ENCODE measurements at regions of chr20 and their contacts with region 1.

Region 1: DNA sequence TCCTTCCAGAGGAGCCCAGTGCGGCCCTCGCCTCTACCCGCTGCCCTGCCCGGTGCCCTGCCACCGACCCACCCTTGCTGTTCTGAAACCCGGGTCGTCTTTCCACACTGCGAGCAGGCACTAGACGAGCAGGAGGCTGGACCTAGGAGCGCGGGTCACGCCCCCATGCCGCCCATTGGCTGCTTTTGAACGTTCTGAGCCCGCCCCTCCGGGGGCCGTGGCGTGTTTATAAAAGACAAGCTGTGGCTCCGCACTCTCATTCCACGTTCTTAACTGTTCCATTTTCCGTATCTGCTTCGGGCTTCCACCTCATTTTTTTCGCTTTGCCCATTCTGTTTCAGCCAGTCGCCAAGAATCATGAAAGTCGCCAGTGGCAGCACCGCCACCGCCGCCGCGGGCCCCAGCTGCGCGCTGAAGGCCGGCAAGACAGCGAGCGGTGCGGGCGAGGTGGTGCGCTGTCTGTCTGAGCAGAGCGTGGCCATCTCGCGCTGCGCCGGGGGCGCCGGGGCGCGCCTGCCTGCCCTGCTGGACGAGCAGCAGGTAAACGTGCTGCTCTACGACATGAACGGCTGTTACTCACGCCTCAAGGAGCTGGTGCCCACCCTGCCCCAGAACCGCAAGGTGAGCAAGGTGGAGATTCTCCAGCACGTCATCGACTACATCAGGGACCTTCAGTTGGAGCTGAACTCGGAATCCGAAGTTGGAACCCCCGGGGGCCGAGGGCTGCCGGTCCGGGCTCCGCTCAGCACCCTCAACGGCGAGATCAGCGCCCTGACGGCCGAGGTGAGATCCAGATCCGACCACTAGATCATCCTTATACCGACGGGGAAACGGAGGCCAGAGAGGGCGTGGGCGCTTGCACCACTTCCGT is at the start of gene ID1:
- DNase-seq: peak; percentile 91 to 98
- ATAC-seq: peak; percentile 51 to 62
- H3K4me3 ChIP-seq: peak within 1 kb of the TSS; percentile 93
- H3K27ac ChIP-seq: peak within 1 kb of the TSS; percentile 97 to 98
- H3K4me1 ChIP-seq: peaks cover 51% of the 10 kb centered on the region
- CTCF ChIP-seq: no peak
- EP300 ChIP-seq: no peak
- POLR2A ChIP-seq: peak; percentile 92
- RAD21 ChIP-seq: peak in 1 of 2 experiments; percentile 18; a peak in 2 of 5 replicates
- polyA plus RNA-seq, gene ID1: 237 and 250 TPM in 2 replicates

Region 2: GRCh38 chr20:31547017-31547675 is 58.1 kb before region 1 on chr20:
- CTCF ChIA-PET with region 1: interaction called, 966 read pairs
- POLR2A ChIA-PET with region 1: interaction called, 6 read pairs
- DNase-seq: no peak
- ATAC-seq: no peak
- H3K4me3 ChIP-seq: no peak overlapping the region
- H3K27ac ChIP-seq: no peak overlapping the region
- H3K4me1 ChIP-seq: peaks cover 7% of the 10 kb centered on the region
- CTCF ChIP-seq: no peak
- EP300 ChIP-seq: no peak
- POLR2A ChIP-seq: no peak
- RAD21 ChIP-seq: no peak

Region 3: GRCh38 chr20:31560094-31560899 is 45.0 kb before region 1 on chr20:
- CTCF ChIA-PET with region 1: interaction called, 966 read pairs
- POLR2A ChIA-PET with region 1: interaction called, 172 read pairs
- DNase-seq: peak; percentile 78 to 94
- ATAC-seq: peak; percentile 56 to 70
- H3K4me3 ChIP-seq: no peak overlapping the region
- H3K27ac ChIP-seq: peak overlapping the region; percentile 90 to 97
- H3K4me1 ChIP-seq: peaks cover 48% of the 10 kb centered on the region
- CTCF ChIP-seq: peak; percentile 95
- EP300 ChIP-seq: no peak
- POLR2A ChIP-seq: no peak
- RAD21 ChIP-seq: peak; percentile 65 to 66

Region 4: DNA sequence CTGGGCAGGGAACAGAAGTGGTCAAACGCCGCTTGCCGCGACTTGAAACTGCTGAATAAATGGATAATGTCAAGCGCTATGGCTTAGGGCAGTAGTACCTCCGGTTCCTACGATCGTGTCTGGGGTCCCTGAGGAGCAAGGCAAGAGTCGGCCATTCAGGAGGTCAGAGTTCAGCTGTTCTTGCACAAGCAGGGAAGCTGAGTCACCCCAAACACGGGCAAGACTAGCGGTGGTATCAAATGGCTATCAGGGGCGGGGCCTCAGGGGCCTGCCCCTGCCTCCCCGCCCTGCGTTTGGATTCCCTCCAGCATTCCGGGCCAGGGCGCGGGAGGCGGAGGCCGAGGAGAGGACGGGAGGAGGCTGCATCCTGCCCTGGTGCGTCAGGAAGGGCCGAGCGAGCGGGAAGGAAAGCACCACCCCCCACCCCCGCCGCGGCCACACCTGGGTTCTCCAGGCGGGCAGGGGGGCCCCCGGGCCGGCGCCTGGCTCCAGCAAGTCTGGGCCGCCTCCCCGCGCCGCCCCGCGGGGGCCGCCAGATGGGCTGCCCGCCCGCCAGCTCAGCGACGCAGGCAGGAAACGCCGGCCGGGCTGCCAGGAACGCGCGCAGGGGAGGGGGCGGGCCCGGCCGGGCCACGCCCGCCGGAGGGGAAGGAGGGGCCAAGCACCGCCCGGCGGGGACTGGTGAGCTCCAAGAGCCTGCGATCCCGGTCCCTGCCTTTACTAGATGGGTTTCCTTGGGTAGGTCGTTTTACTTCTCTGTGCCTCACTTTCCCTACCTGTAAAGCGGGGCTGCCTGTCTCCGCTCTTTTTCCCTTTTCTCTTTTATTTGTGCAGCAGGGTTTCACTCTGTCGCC is 32.3 kb before region 1 on chr20:
- CTCF ChIA-PET with region 1: interaction called, 903 read pairs
- POLR2A ChIA-PET with region 1: interaction called, 214 read pairs
- DNase-seq: peak; percentile 83 to 99
- ATAC-seq: peak; percentile 79
- H3K4me3 ChIP-seq: peak overlapping the region; percentile 62
- H3K27ac ChIP-seq: peak overlapping the region; percentile 93 to 99
- H3K4me1 ChIP-seq: peaks cover 53% of the 10 kb centered on the region
- CTCF ChIP-seq: no peak
- EP300 ChIP-seq: peak; percentile 92 to 98
- POLR2A ChIP-seq: peak; percentile 52
- RAD21 ChIP-seq: peak in 1 of 2 experiments; percentile 44; a peak in 3 of 5 replicates

Region 5: GRCh38 chr20:31580706-31581105 is 24.6 kb before region 1 on chr20:
- CTCF ChIA-PET with region 1: interaction called, 903 read pairs
- POLR2A ChIA-PET with region 1: interaction called, 10 read pairs
- DNase-seq: no peak
- ATAC-seq: no peak
- H3K4me3 ChIP-seq: no peak overlapping the region
- H3K27ac ChIP-seq: peak overlapping the region in 1 of 2 experiments; percentile 11; a peak in 3 of 6 replicates
- H3K4me1 ChIP-seq: no peaks in the 10 kb centered on the region
- CTCF ChIP-seq: no peak
- EP300 ChIP-seq: no peak
- POLR2A ChIP-seq: no peak
- RAD21 ChIP-seq: no peak

Region 6: DNA sequence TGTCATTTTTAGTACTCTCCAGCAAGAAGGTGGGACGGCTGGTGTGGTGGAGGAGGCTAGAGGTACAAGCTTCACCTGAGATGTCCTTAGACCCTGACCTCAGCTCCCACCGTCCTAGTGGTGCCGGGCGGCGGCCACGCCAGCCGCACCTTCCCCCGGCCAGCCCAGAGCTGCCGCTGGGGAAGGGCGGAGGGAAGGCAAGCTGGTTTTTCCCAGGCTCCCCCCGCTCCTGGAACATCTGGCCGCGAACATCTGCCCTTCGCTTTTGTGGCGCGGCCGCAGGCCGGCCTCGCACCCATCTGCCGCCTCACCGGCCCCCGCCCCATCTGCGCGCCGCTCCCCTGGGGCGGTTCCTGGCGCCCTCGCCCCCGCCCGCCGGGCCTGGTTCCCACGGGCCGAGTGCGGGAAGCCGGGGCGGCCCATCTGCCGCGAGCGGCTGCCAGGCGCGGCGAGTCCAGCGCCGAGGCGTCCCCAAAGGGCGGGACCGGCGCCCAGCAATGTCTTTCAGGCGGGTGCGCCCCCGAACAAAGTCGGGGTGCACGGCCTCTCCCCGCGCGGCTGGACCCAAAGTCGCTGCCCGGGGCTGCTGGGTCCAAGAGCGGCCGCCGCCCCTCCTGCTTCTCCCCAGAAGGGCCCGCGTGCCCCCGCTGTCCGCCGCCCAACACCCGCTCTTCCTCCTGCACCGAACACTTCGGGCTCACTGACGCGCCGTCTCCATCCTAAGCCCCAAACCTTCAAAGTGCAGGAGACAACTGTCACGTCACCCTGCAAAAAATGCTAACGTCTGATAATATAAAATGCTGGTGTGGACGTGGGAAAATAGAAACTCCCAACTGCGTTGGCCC is 17.5 kb before region 1 on chr20:
- CTCF ChIA-PET with region 1: interaction called, 172 read pairs
- POLR2A ChIA-PET with region 1: interaction called, 265 read pairs
- DNase-seq: no peak
- ATAC-seq: peak; percentile 72 to 81
- H3K4me3 ChIP-seq: peak overlapping the region; percentile 45
- H3K27ac ChIP-seq: peak overlapping the region; percentile 98
- H3K4me1 ChIP-seq: peaks cover 32% of the 10 kb centered on the region
- CTCF ChIP-seq: no peak
- EP300 ChIP-seq: no peak
- POLR2A ChIP-seq: peak; percentile 2; the same call in 1 of the 2 replicates
- RAD21 ChIP-seq: no peak

Region 7: DNA sequence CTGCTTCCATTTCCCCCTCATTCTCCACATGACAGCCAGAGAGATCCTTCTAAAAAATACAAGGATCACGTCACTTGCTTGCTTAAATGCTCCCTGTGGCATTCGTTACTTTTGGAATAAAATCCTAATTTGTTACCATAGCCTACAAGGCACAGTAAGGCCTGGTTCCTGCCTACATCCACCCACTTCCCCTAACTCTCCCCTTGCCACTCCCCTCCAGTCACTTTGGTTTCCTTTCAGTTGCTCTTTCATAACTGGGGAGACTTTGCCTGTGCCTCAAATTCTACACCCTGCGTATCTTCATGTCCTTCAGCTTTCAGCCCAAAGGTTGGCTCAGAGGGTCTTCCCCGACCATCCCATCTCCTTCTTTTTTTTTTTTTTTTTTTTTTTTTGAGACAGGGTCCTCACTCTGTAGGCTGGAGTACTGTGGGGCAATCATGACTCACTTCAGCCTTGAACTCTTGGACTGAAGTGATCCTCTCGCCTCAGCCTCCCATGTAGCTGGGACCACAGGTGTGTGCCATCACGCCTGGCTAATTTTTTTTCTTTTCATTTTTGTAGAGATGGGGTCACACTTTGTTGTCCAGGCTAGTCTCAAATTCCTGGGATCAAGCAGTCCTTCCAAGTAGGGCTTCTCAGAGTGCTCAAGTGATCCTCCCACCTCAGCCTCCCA is 12.3 kb after region 1 on chr20:
- CTCF ChIA-PET with region 1: interaction called, 80 read pairs
- POLR2A ChIA-PET with region 1: interaction called, 14 read pairs
- DNase-seq: no peak
- ATAC-seq: no peak
- H3K4me3 ChIP-seq: no peak overlapping the region
- H3K27ac ChIP-seq: no peak overlapping the region
- H3K4me1 ChIP-seq: peaks cover 1% of the 10 kb centered on the region
- CTCF ChIP-seq: no peak
- EP300 ChIP-seq: no peak
- POLR2A ChIP-seq: no peak
- RAD21 ChIP-seq: no peak